CD4-positive, alpha-beta T cell (primary cell): ENCODE measurements at regions of chr4 and their contacts with region 1.

Region 1: GRCh38 chr4:99927566-99927965 is 18.9 kb downstream of the DNAJB14 start:
- DNase-seq: no peak
- ATAC-seq: no peak
- H3K4me3 ChIP-seq: no peak overlapping the region
- H3K4me3 Mint-ChIP-seq: no peak overlapping the region
- H3K27ac ChIP-seq: no peak overlapping the region
- H3K27ac Mint-ChIP-seq: no peak overlapping the region
- H3K4me1 ChIP-seq: peaks cover 5% of the 10 kb centered on the region
- H3K4me1 Mint-ChIP-seq: peaks cover 54% of the 10 kb centered on the region
- H3K27me3 ChIP-seq: no peaks in the 10 kb centered on the region
- H3K27me3 Mint-ChIP-seq: no peaks in the 10 kb centered on the region
- CTCF ChIP-seq: no peak

Region 2: GRCh38 chr4:98222306-98222705 is 1705.3 kb before region 1 on chr4:
- CTCF ChIA-PET with region 1: no interaction called
- POLR2A ChIA-PET with region 1: no interaction called
- intact Hi-C with region 1: no loop called
- DNase-seq: no peak
- ATAC-seq: no peak
- H3K4me3 ChIP-seq: no peak overlapping the region
- H3K4me3 Mint-ChIP-seq: no peak overlapping the region
- H3K27ac ChIP-seq: no peak overlapping the region
- H3K27ac Mint-ChIP-seq: no peak overlapping the region
- H3K4me1 ChIP-seq: no peaks in the 10 kb centered on the region
- H3K4me1 Mint-ChIP-seq: no peaks in the 10 kb centered on the region
- H3K27me3 ChIP-seq: no peaks in the 10 kb centered on the region
- H3K27me3 Mint-ChIP-seq: no peaks in the 10 kb centered on the region
- CTCF ChIP-seq: no peak

Region 3: GRCh38 chr4:99593781-99594636 is 333.6 kb before region 1 on chr4:
- CTCF ChIA-PET with region 1: no interaction called
- POLR2A ChIA-PET with region 1: no interaction called
- intact Hi-C with region 1: no loop called
- DNase-seq: no peak
- ATAC-seq: no peak
- H3K4me3 ChIP-seq: no peak overlapping the region
- H3K4me3 Mint-ChIP-seq: no peak overlapping the region
- H3K27ac ChIP-seq: no peak overlapping the region
- H3K27ac Mint-ChIP-seq: no peak overlapping the region
- H3K4me1 ChIP-seq: no peaks in the 10 kb centered on the region
- H3K4me1 Mint-ChIP-seq: no peaks in the 10 kb centered on the region
- H3K27me3 ChIP-seq: peaks cover 0 to 4% of the 10 kb centered on the region in 2 experiments
- H3K27me3 Mint-ChIP-seq: no peaks in the 10 kb centered on the region
- CTCF ChIP-seq: no peak

Region 4: DNA sequence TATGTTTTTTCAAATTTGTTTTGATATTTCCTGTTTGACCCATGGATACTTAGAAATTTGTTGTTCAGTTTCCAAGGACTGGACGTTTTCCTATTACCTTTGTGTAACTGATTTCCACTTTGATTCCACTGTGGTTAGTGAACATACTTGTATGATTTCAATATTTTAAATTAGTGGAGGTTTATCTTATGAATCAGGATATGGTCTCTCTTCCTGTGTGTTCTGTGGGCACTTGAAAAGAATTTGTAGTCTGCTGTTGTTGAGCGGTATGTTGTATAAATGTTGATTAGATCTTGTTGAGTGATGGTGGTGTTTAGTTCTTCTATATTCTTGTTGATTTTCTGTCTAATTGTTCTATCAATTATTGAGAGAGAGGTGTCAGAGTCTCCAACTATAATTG is 12.1 kb before region 1 on chr4:
- CTCF ChIA-PET with region 1: no interaction called
- POLR2A ChIA-PET with region 1: no interaction called
- intact Hi-C with region 1: loop called (anchors 2 kb)
- DNase-seq: no peak
- ATAC-seq: no peak
- H3K4me3 ChIP-seq: no peak overlapping the region
- H3K4me3 Mint-ChIP-seq: no peak overlapping the region
- H3K27ac ChIP-seq: no peak overlapping the region
- H3K27ac Mint-ChIP-seq: peak overlapping the region; percentile 15
- H3K4me1 ChIP-seq: peaks cover 4% of the 10 kb centered on the region
- H3K4me1 Mint-ChIP-seq: peaks cover 26% of the 10 kb centered on the region
- H3K27me3 ChIP-seq: no peaks in the 10 kb centered on the region
- H3K27me3 Mint-ChIP-seq: no peaks in the 10 kb centered on the region
- CTCF ChIP-seq: no peak

Region 5: GRCh38 chr4:100042227-100042626 is 114.7 kb after region 1 on chr4:
- CTCF ChIA-PET with region 1: no interaction called
- POLR2A ChIA-PET with region 1: no interaction called
- intact Hi-C with region 1: no loop called
- DNase-seq: no peak
- ATAC-seq: no peak
- H3K4me3 ChIP-seq: no peak overlapping the region
- H3K4me3 Mint-ChIP-seq: no peak overlapping the region
- H3K27ac ChIP-seq: no peak overlapping the region
- H3K27ac Mint-ChIP-seq: no peak overlapping the region
- H3K4me1 ChIP-seq: no peaks in the 10 kb centered on the region
- H3K4me1 Mint-ChIP-seq: no peaks in the 10 kb centered on the region
- H3K27me3 ChIP-seq: no peaks in the 10 kb centered on the region
- H3K27me3 Mint-ChIP-seq: no peaks in the 10 kb centered on the region
- CTCF ChIP-seq: no peak

Region 6: GRCh38 chr4:100130491-100130890 is 202.9 kb after region 1 on chr4:
- CTCF ChIA-PET with region 1: no interaction called
- POLR2A ChIA-PET with region 1: no interaction called
- intact Hi-C with region 1: no loop called
- DNase-seq: no peak
- ATAC-seq: no peak
- H3K4me3 ChIP-seq: no peak overlapping the region
- H3K4me3 Mint-ChIP-seq: no peak overlapping the region
- H3K27ac ChIP-seq: no peak overlapping the region
- H3K27ac Mint-ChIP-seq: no peak overlapping the region
- H3K4me1 ChIP-seq: no peaks in the 10 kb centered on the region
- H3K4me1 Mint-ChIP-seq: no peaks in the 10 kb centered on the region
- H3K27me3 ChIP-seq: no peaks in the 10 kb centered on the region
- H3K27me3 Mint-ChIP-seq: no peaks in the 10 kb centered on the region
- CTCF ChIP-seq: no peak